ENCODE measurements at regions of chr7 and their contacts with region 1.

Region 1: GRCh38 chr7:2709553-2710285 is 21.7 kb downstream of the AMZ1 start:
- DNase-seq: peak; percentile 54
- H3K4me3 ChIP-seq: no peak overlapping the region
- H3K27ac ChIP-seq: no peak overlapping the region
- H3K4me1 ChIP-seq: no peaks in the 10 kb centered on the region
- H3K27me3 ChIP-seq: no peaks in the 10 kb centered on the region
- CTCF ChIP-seq: peak; percentile 93 to 99
- POLR2A ChIP-seq: no peak

Region 2: DNA sequence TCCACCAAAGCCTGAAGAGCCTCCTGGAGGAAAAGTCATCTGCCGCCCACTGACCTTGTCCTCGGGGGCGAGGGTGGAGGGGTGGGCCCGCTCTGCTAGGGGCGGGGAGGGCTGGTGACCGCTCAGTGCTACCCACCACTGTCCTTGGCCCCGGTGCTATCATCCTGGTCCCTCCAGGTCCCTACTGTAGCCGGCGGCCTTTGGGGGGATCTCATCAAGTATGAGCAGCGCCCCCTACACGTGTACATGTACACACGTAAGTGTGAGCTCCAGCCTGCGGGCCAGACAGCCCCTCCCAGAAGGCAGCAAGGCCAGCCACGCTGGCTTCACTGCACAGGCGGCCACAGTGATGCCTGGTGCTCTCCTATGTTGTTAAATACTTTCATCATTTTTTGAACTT is 58.4 kb before region 1 on chr7:
- CTCF ChIA-PET with region 1: no interaction called
- POLR2A ChIA-PET with region 1: no interaction called
- dilution Hi-C with region 1: no loop called
- intact Hi-C with region 1: no loop called
- DNase-seq: no peak
- H3K4me3 ChIP-seq: no peak overlapping the region
- H3K27ac ChIP-seq: no peak overlapping the region
- H3K4me1 ChIP-seq: no peaks in the 10 kb centered on the region
- H3K27me3 ChIP-seq: no peaks in the 10 kb centered on the region
- CTCF ChIP-seq: peak in 1 of 2 donors; percentile 22
- POLR2A ChIP-seq: no peak

Region 3: DNA sequence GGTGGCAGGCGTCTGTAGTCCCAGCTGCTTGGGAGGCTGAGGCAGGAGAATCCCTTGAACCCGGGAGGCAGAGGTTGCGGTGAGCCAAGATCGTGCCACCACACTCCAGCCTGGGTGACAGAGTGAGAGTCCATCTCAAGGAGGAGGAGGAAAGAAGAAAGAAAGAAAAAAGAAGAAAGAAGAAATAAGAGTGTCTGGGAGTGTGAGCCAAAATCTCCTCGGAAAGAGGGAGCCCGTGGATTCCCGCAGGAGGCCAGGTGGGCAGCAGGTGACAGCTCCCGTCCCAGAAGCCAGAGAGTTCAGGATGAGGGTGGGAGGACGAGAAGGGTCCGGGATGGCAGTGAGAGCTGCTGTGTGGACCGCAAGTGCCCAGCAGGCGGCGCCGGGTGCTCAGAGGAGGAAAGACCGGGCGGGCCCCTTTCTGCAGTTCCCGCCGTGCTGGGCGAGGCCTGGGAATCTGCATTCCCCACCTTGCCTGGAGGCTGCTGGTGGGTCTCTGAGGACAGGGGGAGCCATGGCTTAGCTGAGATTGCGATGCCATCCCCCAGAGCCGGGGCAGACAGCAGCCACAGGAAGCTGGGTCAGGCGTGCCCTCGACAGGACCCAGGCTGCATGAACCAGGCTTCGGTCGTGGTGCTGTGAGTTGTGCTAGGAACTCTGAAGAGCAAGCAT is 38.9 kb before region 1 on chr7:
- CTCF ChIA-PET with region 1: interaction called, 32 read pairs
- POLR2A ChIA-PET with region 1: no interaction called
- dilution Hi-C with region 1: no loop called
- intact Hi-C with region 1: loop called (anchors 2 kb)
- DNase-seq: peak; percentile 35
- H3K4me3 ChIP-seq: no peak overlapping the region
- H3K27ac ChIP-seq: no peak overlapping the region
- H3K4me1 ChIP-seq: no peaks in the 10 kb centered on the region
- H3K27me3 ChIP-seq: peaks cover 0 to 3% of the 10 kb centered on the region in 2 experiments
- CTCF ChIP-seq: peak; percentile 84 to 95
- POLR2A ChIP-seq: no peak

Region 4: GRCh38 chr7:2698581-2699288 is 11.0 kb before region 1 on chr7:
- CTCF ChIA-PET with region 1: interaction called, 29 read pairs
- POLR2A ChIA-PET with region 1: no interaction called
- dilution Hi-C with region 1: no loop called
- intact Hi-C with region 1: no loop called
- DNase-seq: no peak
- H3K4me3 ChIP-seq: no peak overlapping the region
- H3K27ac ChIP-seq: no peak overlapping the region
- H3K4me1 ChIP-seq: no peaks in the 10 kb centered on the region
- H3K27me3 ChIP-seq: peaks cover 0 to 2% of the 10 kb centered on the region in 2 experiments
- CTCF ChIP-seq: no peak
- POLR2A ChIP-seq: no peak

Region 5: DNA sequence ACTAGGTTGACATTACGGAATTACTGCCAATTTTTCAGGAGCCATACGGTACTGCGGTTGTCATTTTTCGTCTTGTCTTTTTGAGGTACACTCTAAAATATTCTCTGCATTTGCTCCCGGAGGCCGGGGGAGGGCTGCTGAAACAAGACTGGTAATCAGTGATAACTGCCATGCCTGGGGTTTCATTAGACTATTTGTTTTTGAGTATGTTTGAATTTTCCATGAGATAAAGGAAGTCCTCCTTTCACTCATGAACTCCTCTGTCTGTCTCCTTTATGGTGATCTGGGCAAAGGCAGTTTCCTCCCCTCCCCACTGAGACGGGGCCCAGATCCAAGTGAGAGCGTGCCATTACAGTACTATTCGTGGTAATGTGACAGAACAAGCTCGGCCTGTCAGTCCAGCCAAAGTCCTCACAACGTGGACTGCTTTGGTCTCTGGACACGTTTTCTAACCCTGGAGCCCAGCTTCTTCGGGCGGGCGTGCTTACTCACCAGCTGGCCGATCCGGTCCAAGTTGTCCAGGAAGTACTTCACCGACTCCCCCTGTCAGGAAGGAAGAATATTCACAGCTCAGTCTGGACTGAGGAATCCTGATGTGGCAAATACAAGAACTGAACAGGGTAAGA is 23.4 kb after region 1 on chr7:
- CTCF ChIA-PET with region 1: interaction called, 20 read pairs
- POLR2A ChIA-PET with region 1: no interaction called
- dilution Hi-C with region 1: no loop called
- intact Hi-C with region 1: no loop called
- DNase-seq: peak; percentile 81
- H3K4me3 ChIP-seq: no peak overlapping the region
- H3K27ac ChIP-seq: peak overlapping the region; percentile 54
- H3K4me1 ChIP-seq: peaks cover 33% of the 10 kb centered on the region
- H3K27me3 ChIP-seq: no peaks in the 10 kb centered on the region
- CTCF ChIP-seq: no peak
- POLR2A ChIP-seq: no peak

Measured in endothelial cell of umbilical vein (primary cell).